ENCODE measurements at regions of chr11 and their contacts with region 1.

Region 1: DNA sequence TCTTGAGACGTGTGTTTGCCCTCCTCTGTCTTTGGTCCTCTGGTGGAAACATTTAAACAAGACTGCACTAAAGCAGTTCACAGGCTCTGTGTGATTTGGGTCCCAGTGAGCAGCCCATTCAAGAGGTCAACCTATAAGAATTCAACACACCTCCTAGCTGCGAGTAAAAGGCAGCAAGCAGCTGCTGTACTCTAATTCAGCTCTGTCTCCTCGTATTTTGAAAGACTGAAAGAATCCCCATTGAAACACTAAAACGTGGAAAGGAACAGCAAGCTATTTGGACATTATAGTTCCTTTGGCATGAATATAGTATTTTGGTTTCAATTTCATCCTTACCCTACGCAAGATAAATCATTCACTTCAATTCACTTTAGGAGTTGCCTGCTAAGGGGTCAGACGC is 1046.7 kb downstream of the DLG2 start:
- DNase-seq: no peak
- H3K4me3 ChIP-seq: no peak overlapping the region
- H3K27ac ChIP-seq: no peak overlapping the region
- H3K4me1 ChIP-seq: no peaks in the 10 kb centered on the region
- H3K27me3 ChIP-seq: peaks cover 3% of the 10 kb centered on the region
- CTCF ChIP-seq: no peak
- EP300 ChIP-seq: no peak
- POLR2A ChIP-seq: no peak

Region 2: DNA sequence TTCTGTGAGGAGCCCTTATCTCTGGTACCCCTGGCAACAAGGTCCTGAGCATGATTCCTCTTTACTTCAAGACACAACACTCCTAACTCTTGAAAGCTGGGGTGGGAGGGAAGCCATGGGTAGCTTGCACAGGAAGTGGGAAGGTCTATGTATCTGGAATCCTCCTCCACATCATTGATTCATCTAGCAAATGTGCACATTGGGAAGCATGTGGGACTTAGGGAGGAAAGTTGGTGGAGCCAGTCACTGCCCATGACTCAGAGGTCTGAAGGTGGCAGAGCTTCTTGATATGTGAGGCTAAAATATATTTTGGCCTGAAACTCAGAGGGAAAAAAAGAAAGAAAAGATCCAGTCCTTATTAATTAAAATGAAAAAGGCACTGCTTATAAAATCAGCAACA is 45.8 kb after region 1 on chr11:
- intact Hi-C with region 1: no loop called
- DNase-seq: no peak
- H3K4me3 ChIP-seq: no peak overlapping the region
- H3K27ac ChIP-seq: no peak overlapping the region
- H3K4me1 ChIP-seq: no peaks in the 10 kb centered on the region
- H3K27me3 ChIP-seq: no peaks in the 10 kb centered on the region
- CTCF ChIP-seq: no peak
- EP300 ChIP-seq: no peak
- POLR2A ChIP-seq: no peak

Region 3: DNA sequence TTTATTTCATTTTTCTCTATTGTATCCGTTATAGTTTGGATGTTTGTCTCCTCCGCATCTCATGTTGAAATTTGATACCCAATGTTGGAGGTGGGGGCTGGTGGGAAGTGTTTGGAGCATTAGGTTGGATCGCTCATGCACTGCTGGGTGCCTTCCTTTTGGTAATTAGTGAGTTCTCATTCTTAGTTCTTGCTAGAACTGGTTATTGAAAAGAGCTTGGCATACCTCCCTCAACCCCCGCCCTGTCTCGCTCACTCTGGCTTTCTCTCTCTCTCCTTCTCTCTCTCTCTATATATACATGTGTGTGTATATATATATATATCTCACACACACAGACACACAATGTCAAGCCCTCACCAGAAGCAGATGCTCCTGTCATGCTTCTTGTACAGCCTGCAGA is 68.0 kb after region 1 on chr11:
- intact Hi-C with region 1: loop called in 1 of 4 experiments (anchors 10 kb)
- DNase-seq: no peak
- H3K4me3 ChIP-seq: no peak overlapping the region
- H3K27ac ChIP-seq: no peak overlapping the region
- H3K4me1 ChIP-seq: no peaks in the 10 kb centered on the region
- H3K27me3 ChIP-seq: no peaks in the 10 kb centered on the region
- CTCF ChIP-seq: no peak
- EP300 ChIP-seq: no peak
- POLR2A ChIP-seq: no peak

Region 4: GRCh38 chr11:84691830-84692229 is 111.4 kb after region 1 on chr11:
- intact Hi-C with region 1: no loop called
- DNase-seq: no peak
- H3K4me3 ChIP-seq: no peak overlapping the region
- H3K27ac ChIP-seq: no peak overlapping the region
- H3K4me1 ChIP-seq: no peaks in the 10 kb centered on the region
- H3K27me3 ChIP-seq: no peaks in the 10 kb centered on the region
- CTCF ChIP-seq: no peak
- EP300 ChIP-seq: no peak
- POLR2A ChIP-seq: no peak